ENCODE measurements at regions of chr11 and their contacts with region 1.

Region 1: DNA sequence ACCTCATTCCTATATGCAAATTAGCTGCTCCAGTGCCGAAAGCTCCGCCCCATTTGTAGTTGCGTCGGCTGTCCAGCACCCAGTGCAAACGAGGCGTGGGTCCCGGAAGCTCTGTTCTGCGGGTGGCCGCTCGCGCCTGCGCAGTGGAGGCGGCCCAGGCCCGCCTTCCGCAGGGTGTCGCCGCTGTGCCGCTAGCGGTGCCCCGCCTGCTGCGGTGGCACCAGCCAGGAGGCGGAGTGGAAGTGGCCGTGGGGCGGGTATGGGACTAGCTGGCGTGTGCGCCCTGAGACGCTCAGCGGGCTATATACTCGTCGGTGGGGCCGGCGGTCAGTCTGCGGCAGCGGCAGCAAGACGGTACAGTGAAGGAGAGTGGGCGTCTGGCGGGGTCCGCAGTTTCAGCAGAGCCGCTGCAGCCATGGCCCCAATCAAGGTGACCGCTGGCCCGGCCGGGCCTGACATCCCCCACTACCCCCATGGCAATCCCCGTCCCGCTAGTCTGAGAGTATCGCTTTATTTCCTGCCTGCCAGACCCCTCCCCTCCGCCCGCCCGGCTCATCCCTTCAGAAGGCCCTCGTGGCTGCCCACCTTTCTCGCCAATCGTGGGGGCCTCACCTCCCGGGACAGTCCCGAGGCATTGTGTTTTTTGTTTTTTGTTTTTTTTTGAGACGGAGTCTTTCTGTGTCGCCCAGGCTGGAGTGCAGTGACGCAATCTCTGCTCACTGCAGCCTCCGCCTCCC is at the start of gene PRDX5:
- DNase-seq: peak; percentile 97
- H3K4me3 Mint-ChIP-seq: peak within 1 kb of the TSS; percentile 92
- H3K27ac Mint-ChIP-seq: peak within 1 kb of the TSS; percentile 99
- H3K4me1 Mint-ChIP-seq: peaks cover 28% of the 10 kb centered on the region
- H3K27me3 Mint-ChIP-seq: no peaks in the 10 kb centered on the region
- total RNA-seq, gene PRDX5: 156 to 164 TPM

Region 2: GRCh38 chr11:64240394-64241174 is 77.5 kb before region 1 on chr11 and contains the start of gene FKBP2:
- CTCF ChIA-PET with region 1: interaction called, 4 read pairs
- POLR2A ChIA-PET with region 1: interaction called, 13 read pairs
- intact Hi-C with region 1: loop called (anchors 1 kb)
- DNase-seq: peak; percentile 98
- H3K4me3 Mint-ChIP-seq: peak within 1 kb of the TSS; percentile 89
- H3K27ac Mint-ChIP-seq: peak within 1 kb of the TSS; percentile 98
- H3K4me1 Mint-ChIP-seq: peaks cover 37% of the 10 kb centered on the region
- H3K27me3 Mint-ChIP-seq: no peaks in the 10 kb centered on the region
- total RNA-seq, gene FKBP2: 28.7 to 34.9 TPM

Region 3: GRCh38 chr11:64269380-64270234 is 48.5 kb before region 1 on chr11:
- CTCF ChIA-PET with region 1: interaction called, 8 read pairs
- POLR2A ChIA-PET with region 1: interaction called, 16 read pairs
- intact Hi-C with region 1: loop called (anchors 1 kb)
- DNase-seq: peak; percentile 99
- H3K4me3 Mint-ChIP-seq: peak overlapping the region; percentile 89
- H3K27ac Mint-ChIP-seq: peak overlapping the region; percentile 95
- H3K4me1 Mint-ChIP-seq: peaks cover 15% of the 10 kb centered on the region
- H3K27me3 Mint-ChIP-seq: no peaks in the 10 kb centered on the region

Region 4: DNA sequence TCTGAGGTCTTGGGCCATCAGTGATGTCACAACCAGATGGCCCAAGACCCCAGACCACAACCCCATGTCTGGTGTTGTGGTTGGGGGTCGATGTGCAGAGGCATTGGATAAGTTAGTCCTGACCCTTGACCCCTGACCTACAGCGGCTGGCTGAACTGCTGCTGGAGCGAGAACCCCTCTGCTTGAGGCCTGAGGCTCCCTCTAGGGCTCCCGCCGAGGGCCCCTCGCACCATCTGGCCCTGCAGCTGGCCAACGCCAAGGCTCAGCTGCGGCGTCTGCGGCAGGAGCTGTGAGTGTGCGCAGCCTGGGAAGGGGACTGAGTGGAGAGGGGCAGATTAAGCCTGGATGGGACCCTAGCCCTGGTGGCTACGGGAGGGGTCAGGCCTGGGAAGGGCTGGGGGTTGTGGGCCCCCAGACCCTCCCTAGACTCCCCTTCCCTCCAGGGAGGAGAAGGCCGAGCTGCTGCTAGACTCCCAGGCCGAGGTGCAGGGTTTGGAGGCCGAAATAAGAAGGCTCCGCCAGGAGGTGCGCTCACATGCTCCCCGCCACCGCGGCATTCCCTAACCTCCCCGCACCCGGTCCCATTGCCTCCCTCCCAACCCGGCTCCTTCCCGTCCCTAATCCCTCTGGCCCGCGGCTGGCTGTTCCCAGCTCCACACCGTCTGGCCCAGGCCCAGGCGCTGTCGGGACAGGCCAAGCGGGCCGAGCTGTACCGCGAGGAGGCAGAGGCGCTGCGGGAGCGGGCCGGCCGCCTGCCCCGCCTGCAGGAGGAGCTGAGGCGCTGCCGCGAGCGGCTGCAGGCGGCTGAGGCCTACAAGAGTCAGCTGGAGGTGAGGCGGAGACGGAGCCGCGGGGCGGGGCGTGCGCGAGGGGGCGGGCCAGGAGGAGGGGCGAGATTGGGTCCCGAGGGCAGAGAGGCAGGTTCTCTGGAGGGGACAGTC is 24.0 kb after region 1 on chr11:
- CTCF ChIA-PET with region 1: interaction called, 33 read pairs
- POLR2A ChIA-PET with region 1: interaction called, 15 read pairs
- intact Hi-C with region 1: loop called (anchors 1 kb)
- DNase-seq: peak; percentile 96
- H3K4me3 Mint-ChIP-seq: peak overlapping the region; percentile 37
- H3K27ac Mint-ChIP-seq: no peak overlapping the region
- H3K4me1 Mint-ChIP-seq: peaks cover 42% of the 10 kb centered on the region
- H3K27me3 Mint-ChIP-seq: no peaks in the 10 kb centered on the region

Region 5: DNA sequence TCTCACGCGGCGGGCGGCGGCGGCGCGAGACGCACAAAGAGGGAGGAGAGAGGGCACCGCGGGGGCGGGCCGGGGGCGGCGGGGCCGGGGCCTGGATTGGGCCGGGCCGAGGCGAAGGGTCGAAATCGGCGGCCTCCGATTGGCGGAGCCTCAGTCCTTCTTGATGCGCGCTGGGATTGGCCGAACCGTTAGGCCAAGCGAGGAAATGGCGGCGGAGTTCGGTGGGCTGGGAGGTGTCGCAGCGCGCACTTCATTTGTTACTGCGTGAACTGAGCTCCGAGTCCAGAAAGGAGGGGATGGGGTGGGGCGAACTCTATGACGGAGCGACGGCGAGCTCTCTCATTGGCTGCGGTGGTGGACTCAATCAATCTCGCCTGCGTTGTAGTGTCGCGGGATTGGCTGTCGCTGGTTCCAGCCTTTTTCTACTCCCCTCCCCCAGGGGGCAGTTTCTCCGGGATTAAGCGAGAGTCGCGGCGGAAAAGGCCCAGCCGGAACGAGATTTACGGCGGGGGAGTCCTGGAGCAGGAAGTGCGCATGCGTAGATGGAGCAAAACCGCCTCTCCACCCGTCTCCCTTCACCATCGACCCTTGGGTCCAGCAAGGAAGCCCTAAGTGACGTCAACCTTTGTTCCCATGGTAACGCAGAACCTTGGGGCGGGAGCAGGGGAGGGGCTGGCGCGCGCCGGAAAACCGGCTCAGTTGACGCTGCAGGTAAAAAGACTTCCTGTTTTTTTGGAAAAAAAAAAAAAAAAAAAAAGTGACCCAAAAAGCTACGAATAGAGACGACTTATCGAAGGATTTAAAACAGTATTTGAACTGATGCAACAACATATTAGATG is 460.6 kb after region 1 on chr11 and contains the start of gene SF1:
- CTCF ChIA-PET with region 1: no interaction called
- POLR2A ChIA-PET with region 1: no interaction called
- intact Hi-C with region 1: loop called (anchors 10 kb)
- DNase-seq: peak; percentile 100
- H3K4me3 Mint-ChIP-seq: peak within 1 kb of the TSS; percentile 91
- H3K27ac Mint-ChIP-seq: peak within 1 kb of the TSS; percentile 99
- H3K4me1 Mint-ChIP-seq: peaks cover 57% of the 10 kb centered on the region
- H3K27me3 Mint-ChIP-seq: no peaks in the 10 kb centered on the region
- total RNA-seq, gene SF1: 323 to 328 TPM